Prostate gland (tissue), 2 donors: ENCODE measurements at regions of chr11 and their contacts with region 1.

Region 1: GRCh38 chr11:84524422-84525051 is 1102.6 kb downstream of the DLG2 start:
- DNase-seq: no peak
- H3K4me3 ChIP-seq: no peak overlapping the region
- H3K27ac ChIP-seq: no peak overlapping the region
- H3K4me1 ChIP-seq: no peaks in the 10 kb centered on the region
- H3K27me3 ChIP-seq: no peaks in the 10 kb centered on the region
- CTCF ChIP-seq: peak in 3 of 4 experiments; percentile 39 to 54 (median 43)
- POLR2A ChIP-seq: no peak

Region 2: GRCh38 chr11:83836883-83837654 is 687.5 kb before region 1 on chr11:
- intact Hi-C with region 1: loop called (anchors 5 kb)
- DNase-seq: peak; percentile 8
- H3K4me3 ChIP-seq: no peak overlapping the region
- H3K27ac ChIP-seq: no peak overlapping the region
- H3K4me1 ChIP-seq: no peaks in the 10 kb centered on the region
- H3K27me3 ChIP-seq: no peaks in the 10 kb centered on the region
- CTCF ChIP-seq: peak in 3 of 4 experiments; percentile 46 to 51 (median 47)
- POLR2A ChIP-seq: no peak

Region 3: GRCh38 chr11:83918476-83918875 is 606.1 kb before region 1 on chr11:
- intact Hi-C with region 1: no loop called
- DNase-seq: no peak
- H3K4me3 ChIP-seq: no peak overlapping the region
- H3K27ac ChIP-seq: no peak overlapping the region
- H3K4me1 ChIP-seq: no peaks in the 10 kb centered on the region
- H3K27me3 ChIP-seq: no peaks in the 10 kb centered on the region
- CTCF ChIP-seq: no peak
- POLR2A ChIP-seq: no peak

Region 4: DNA sequence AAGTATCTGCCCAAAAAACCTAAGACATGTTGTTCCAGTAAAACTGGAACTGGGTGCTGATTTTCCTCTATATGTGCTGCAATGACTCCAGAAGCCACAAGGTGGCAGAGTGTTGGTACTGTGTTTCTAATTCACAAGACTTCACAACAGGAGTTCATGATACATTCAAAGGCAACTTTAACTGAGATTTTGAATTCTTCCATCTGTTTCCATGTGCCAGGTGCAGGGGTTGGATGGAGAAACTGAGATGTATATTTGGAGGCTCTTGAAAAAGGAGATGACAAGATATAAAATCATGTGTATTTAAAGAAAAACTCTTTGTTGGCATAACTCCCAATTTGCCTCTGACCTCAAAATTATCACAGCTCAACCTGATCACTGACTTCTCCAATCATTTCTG is 139.8 kb before region 1 on chr11:
- intact Hi-C with region 1: loop called (anchors 10 kb)
- DNase-seq: peak; percentile 14
- H3K4me3 ChIP-seq: no peak overlapping the region
- H3K27ac ChIP-seq: no peak overlapping the region
- H3K4me1 ChIP-seq: no peaks in the 10 kb centered on the region
- H3K27me3 ChIP-seq: no peaks in the 10 kb centered on the region
- CTCF ChIP-seq: peak; percentile 32 to 68 (median 46)
- POLR2A ChIP-seq: no peak

Region 5: GRCh38 chr11:84408946-84409411 is 115.6 kb before region 1 on chr11:
- intact Hi-C with region 1: no loop called
- DNase-seq: no peak
- H3K4me3 ChIP-seq: no peak overlapping the region
- H3K27ac ChIP-seq: no peak overlapping the region
- H3K4me1 ChIP-seq: no peaks in the 10 kb centered on the region
- H3K27me3 ChIP-seq: no peaks in the 10 kb centered on the region
- CTCF ChIP-seq: no peak
- POLR2A ChIP-seq: no peak

Region 6: DNA sequence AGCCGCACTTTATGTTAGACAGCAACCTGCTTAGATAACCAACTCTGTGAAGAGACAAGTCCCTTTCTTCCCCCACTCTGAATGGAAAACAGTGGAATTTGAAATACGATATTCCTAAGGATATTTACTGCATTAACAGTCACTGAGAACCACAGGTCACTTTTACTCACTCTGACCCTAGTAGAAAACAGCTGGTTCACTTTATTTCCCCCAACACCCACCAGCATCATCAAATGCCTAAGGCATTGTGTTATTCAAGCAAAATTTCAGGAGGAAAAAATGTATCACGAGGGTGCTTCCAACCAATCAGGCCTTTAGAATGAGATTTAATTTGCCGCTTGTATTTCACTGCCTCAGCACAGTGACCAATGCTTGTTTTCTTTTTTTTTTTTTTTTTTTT is 104.3 kb before region 1 on chr11:
- intact Hi-C with region 1: no loop called
- DNase-seq: no peak
- H3K4me3 ChIP-seq: no peak overlapping the region
- H3K27ac ChIP-seq: no peak overlapping the region
- H3K4me1 ChIP-seq: no peaks in the 10 kb centered on the region
- H3K27me3 ChIP-seq: no peaks in the 10 kb centered on the region
- CTCF ChIP-seq: no peak
- POLR2A ChIP-seq: no peak